PC-9 (cell line): ENCODE measurements at regions of chrX and their contacts with region 1.

Region 1: DNA sequence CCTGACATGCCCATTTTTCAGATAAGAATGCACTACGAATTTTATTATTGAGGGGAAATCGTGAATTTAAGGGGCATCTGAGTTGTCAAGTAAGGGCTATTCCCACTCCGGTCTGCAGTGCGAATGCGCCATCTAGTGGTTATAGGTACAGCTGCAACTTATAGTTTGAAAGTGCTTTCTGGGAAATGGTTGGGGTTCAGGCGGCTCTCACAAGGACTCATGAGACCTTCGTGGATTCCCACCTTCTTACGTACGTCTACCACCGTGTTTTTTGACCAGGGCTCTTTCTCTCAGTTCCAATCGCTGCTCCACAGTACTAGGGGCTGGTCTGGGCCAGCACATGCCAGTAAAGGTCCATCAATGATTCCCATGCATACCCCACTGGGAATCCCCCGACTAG is 12.3 kb downstream of the MSL3 start:
- DNase-seq: peak; percentile 18 to 44
- H3K4me3 ChIP-seq: no peak overlapping the region
- H3K27ac ChIP-seq: no peak overlapping the region
- H3K4me1 ChIP-seq: no peaks in the 10 kb centered on the region
- H3K27me3 ChIP-seq: no peaks in the 10 kb centered on the region
- CTCF ChIP-seq: peak; percentile 83

Region 2: DNA sequence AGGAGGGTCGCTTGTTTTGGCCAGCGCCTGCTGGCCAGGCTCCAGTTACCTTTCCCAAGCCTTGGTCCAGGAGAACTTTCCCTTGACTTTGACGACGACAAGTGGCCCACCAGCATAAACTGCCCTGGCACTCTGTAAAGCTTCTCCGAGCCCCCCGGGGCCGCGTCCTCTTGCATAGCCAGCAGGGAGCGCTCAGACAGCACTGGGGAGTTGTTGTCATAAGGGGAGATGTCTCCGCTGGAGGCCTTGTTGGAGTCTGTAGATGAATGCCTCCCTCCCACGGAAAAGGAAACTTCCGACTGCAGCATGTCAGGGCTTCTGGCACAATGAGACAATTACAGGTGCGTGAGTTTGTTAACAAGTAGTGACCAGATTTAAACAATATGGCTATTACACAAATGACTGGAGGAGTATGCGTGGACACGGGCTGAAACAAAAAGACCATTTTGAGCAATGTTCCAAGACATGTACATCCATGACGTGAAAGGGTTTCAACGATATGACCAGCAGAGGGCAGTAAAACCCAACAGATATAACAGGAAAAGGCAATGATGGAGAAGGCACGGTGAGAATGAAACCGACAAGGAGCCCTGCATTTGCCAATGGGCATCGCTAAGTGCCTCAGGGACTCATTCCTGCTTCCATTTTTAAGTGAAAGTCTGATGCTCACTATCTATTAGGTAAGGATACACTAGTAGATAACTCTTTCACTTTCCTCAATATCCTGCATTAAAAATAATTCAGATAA is 626.2 kb before region 1 on chrX:
- CTCF ChIA-PET with region 1: no interaction called
- POLR2A ChIA-PET with region 1: no interaction called
- intact Hi-C with region 1: loop called (anchors 1 kb)
- DNase-seq: peak; percentile 30 to 36
- H3K4me3 ChIP-seq: no peak overlapping the region
- H3K27ac ChIP-seq: no peak overlapping the region
- H3K4me1 ChIP-seq: no peaks in the 10 kb centered on the region
- H3K27me3 ChIP-seq: no peaks in the 10 kb centered on the region
- CTCF ChIP-seq: peak; percentile 66

Region 3: DNA sequence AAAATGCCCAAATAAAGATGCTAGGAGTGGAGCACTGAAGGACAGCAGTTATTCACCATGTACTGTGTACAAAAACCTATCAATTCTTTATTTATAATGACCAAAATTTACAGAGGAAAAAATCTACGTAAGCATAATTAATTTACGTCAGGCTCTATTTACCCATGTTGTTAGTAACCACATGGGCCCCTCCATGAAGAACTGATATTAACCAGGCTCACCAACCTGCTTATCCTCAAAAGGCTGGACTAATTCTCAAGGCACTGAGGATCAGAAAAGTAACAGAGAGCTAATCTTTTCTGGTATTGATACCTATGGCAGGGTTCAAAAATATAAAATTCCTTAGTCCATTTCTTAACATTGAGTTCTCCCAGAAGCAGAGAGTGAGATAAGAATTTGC is 244.6 kb before region 1 on chrX:
- CTCF ChIA-PET with region 1: no interaction called
- POLR2A ChIA-PET with region 1: no interaction called
- intact Hi-C with region 1: no loop called
- DNase-seq: no peak
- H3K4me3 ChIP-seq: no peak overlapping the region
- H3K27ac ChIP-seq: no peak overlapping the region
- H3K4me1 ChIP-seq: no peaks in the 10 kb centered on the region
- H3K27me3 ChIP-seq: 0 out of 2 replicates have a peak, but pooled peaks cover 4% of the 10 kb centered on the region
- CTCF ChIP-seq: no peak

Region 4: GRCh38 chrX:11724122-11725017 is 46.0 kb before region 1 on chrX:
- CTCF ChIA-PET with region 1: no interaction called
- POLR2A ChIA-PET with region 1: no interaction called
- intact Hi-C with region 1: no loop called
- DNase-seq: peak in 1 of 2 experiments; percentile 3
- H3K4me3 ChIP-seq: no peak overlapping the region
- H3K27ac ChIP-seq: no peak overlapping the region
- H3K4me1 ChIP-seq: no peaks in the 10 kb centered on the region
- H3K27me3 ChIP-seq: no peaks in the 10 kb centered on the region
- CTCF ChIP-seq: peak; percentile 70

Region 5: DNA sequence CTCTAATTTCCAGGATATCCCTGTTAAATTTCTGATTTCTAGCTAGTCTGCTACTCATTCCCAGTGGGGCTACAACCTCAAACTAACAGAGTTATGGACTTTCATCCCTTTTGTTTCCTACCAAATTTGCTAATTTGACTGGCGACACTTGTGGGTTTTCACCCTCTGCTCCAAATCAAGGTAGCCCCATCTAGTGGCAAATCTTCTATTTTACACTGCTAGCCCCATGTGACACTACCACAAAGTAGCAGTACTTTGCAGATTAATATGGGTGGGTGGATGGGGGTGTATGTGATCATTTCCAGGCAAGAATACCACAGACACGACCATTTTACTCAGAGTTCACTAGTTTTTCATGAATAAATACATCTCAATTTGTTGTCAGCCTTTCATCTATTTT is 138.1 kb after region 1 on chrX:
- CTCF ChIA-PET with region 1: no interaction called
- POLR2A ChIA-PET with region 1: no interaction called
- intact Hi-C with region 1: loop called (anchors 5 kb)
- DNase-seq: no peak
- H3K4me3 ChIP-seq: no peak overlapping the region
- H3K27ac ChIP-seq: no peak overlapping the region
- H3K4me1 ChIP-seq: no peaks in the 10 kb centered on the region
- H3K27me3 ChIP-seq: no peaks in the 10 kb centered on the region
- CTCF ChIP-seq: peak; percentile 52

Region 6: GRCh38 chrX:12065251-12065650 is 294.9 kb after region 1 on chrX:
- CTCF ChIA-PET with region 1: no interaction called
- POLR2A ChIA-PET with region 1: interaction called, 12 read pairs
- intact Hi-C with region 1: no loop called
- DNase-seq: peak; percentile 8 to 39
- H3K4me3 ChIP-seq: no peak overlapping the region
- H3K27ac ChIP-seq: no peak overlapping the region
- H3K4me1 ChIP-seq: no peaks in the 10 kb centered on the region
- H3K27me3 ChIP-seq: no peaks in the 10 kb centered on the region
- CTCF ChIP-seq: no peak